ENCODE measurements at regions of chr18 and their contacts with region 1.

Region 1: GRCh38 chr18:11937874-11938478 is 29.9 kb upstream of the MPPE1 start:
- DNase-seq: peak; percentile 46 to 82 (median 76)
- ATAC-seq: peak; percentile 62
- H3K4me3 ChIP-seq: no peak overlapping the region
- H3K4me3 Mint-ChIP-seq: no peak overlapping the region
- H3K27ac ChIP-seq: no peak overlapping the region
- H3K27ac Mint-ChIP-seq: no peak overlapping the region
- H3K4me1 ChIP-seq: no peaks in the 10 kb centered on the region
- H3K4me1 Mint-ChIP-seq: no peaks in the 10 kb centered on the region
- H3K27me3 ChIP-seq: peaks cover 0 to 2% of the 10 kb centered on the region in 2 experiments
- H3K27me3 Mint-ChIP-seq: no peaks in the 10 kb centered on the region
- CTCF ChIP-seq: peak; percentile 85

Region 2: DNA sequence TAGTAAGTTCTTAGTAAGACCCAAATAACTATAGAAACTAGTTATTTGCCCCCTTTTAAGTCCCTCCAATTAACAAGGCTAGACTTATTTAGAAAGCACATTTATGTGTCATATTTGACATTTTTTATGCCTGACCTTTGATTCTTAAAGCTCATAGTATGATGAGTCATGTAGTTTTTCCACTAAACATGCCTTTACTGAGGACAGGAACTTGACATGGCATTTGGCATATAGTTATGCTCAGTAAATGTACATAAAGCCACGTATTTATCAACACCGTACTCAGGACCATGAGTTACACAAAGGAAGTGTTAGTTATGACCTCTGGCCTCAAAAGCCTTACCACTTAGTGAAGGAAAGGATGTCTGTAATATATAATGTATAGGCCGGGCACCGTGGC is 170.0 kb before region 1 on chr18:
- CTCF ChIA-PET with region 1: no interaction called
- POLR2A ChIA-PET with region 1: no interaction called
- intact Hi-C with region 1: no loop called
- DNase-seq: no peak
- ATAC-seq: no peak
- H3K4me3 ChIP-seq: no peak overlapping the region
- H3K4me3 Mint-ChIP-seq: no peak overlapping the region
- H3K27ac ChIP-seq: no peak overlapping the region
- H3K27ac Mint-ChIP-seq: no peak overlapping the region
- H3K4me1 ChIP-seq: no peaks in the 10 kb centered on the region
- H3K4me1 Mint-ChIP-seq: no peaks in the 10 kb centered on the region
- H3K27me3 ChIP-seq: peaks cover 0 to 3% of the 10 kb centered on the region in 2 experiments
- H3K27me3 Mint-ChIP-seq: peaks cover 7% of the 10 kb centered on the region
- CTCF ChIP-seq: no peak

Region 3: DNA sequence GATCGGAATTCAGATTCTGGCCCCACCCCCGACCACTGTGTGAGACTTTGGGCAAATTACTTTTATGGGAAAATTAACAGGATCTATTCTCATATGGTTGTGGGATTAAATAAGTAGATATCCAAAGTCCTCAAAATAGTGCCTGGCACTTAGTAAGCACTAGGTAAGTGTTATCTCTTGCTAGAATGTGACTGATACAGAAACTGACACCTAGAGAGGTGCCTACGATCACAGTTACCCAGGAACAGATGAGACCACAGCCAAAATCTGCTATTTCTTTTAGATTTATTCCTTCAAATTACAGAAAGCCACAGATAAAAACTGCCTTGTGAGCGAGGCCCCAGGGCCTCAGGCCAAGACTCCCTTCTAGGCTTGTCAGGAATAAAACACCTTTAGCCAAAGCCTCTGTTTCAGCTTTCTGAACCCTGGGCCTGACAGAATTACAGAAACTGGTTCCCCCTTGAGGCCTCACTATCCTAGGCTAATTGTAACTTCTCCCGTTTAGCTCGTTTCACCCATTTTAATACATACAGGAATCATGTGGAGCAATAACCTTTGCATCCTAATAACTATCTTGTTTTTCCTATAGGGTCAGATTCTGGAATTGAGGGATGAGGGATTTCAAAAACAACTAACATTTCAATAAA is 109.1 kb before region 1 on chr18:
- CTCF ChIA-PET with region 1: no interaction called
- POLR2A ChIA-PET with region 1: no interaction called
- intact Hi-C with region 1: no loop called
- DNase-seq: peak in 2 of 9 experiments; percentile 19 to 48
- ATAC-seq: no peak
- H3K4me3 ChIP-seq: no peak overlapping the region
- H3K4me3 Mint-ChIP-seq: no peak overlapping the region
- H3K27ac ChIP-seq: peak overlapping the region in 1 of 2 experiments; percentile 25
- H3K27ac Mint-ChIP-seq: no peak overlapping the region
- H3K4me1 ChIP-seq: no peaks in the 10 kb centered on the region
- H3K4me1 Mint-ChIP-seq: no peaks in the 10 kb centered on the region
- H3K27me3 ChIP-seq: no peaks in the 10 kb centered on the region
- H3K27me3 Mint-ChIP-seq: no peaks in the 10 kb centered on the region
- CTCF ChIP-seq: no peak

Region 4: DNA sequence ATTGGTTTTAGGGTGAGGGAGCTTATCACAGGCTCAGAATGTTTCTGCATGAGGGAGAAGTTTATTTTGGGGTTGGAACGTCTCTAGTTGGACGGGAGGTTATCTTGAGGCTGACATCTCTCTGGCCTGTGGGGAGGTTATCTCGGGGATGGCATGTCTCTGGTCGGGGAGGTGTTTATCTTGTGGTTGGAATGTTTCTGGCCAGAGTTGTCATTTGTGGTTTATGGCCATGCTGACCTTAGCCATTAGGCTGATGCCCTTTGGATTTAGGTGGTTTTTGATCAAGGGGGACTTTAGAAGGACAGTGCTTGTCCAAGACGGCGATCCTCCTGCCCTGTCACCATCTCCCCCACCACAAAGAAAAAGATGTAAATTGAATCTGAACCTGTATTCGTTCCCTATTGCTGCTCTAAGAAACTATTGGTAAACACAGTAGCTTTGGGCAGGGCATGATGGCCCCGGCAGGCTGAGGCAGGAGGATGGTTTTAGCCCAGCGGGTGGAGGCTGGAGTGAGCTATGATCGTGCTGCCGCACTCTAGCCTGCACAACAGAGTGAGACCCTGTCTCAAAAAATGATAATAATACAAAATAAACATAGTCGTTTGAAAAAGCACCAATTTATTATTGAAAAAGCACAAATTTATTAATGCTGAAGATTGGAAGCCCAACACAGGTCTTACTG is 12.0 kb before region 1 on chr18:
- CTCF ChIA-PET with region 1: interaction called, 41 read pairs
- POLR2A ChIA-PET with region 1: no interaction called
- intact Hi-C with region 1: no loop called
- DNase-seq: no peak
- ATAC-seq: no peak
- H3K4me3 ChIP-seq: no peak overlapping the region
- H3K4me3 Mint-ChIP-seq: no peak overlapping the region
- H3K27ac ChIP-seq: no peak overlapping the region
- H3K27ac Mint-ChIP-seq: no peak overlapping the region
- H3K4me1 ChIP-seq: no peaks in the 10 kb centered on the region
- H3K4me1 Mint-ChIP-seq: no peaks in the 10 kb centered on the region
- H3K27me3 ChIP-seq: no peaks in the 10 kb centered on the region
- H3K27me3 Mint-ChIP-seq: peaks cover 4% of the 10 kb centered on the region
- CTCF ChIP-seq: no peak

Region 5: GRCh38 chr18:11980555-11981382 is 42.8 kb after region 1 on chr18:
- CTCF ChIA-PET with region 1: interaction called, 17 read pairs
- POLR2A ChIA-PET with region 1: no interaction called
- intact Hi-C with region 1: no loop called
- DNase-seq: peak; percentile 88 to 97 (median 92)
- ATAC-seq: peak; percentile 90
- H3K4me3 ChIP-seq: peak overlapping the region; percentile 56 to 68
- H3K4me3 Mint-ChIP-seq: peak overlapping the region; percentile 85
- H3K27ac ChIP-seq: no peak overlapping the region
- H3K27ac Mint-ChIP-seq: peak overlapping the region; percentile 52
- H3K4me1 ChIP-seq: no peaks in the 10 kb centered on the region
- H3K4me1 Mint-ChIP-seq: peaks cover 11% of the 10 kb centered on the region
- H3K27me3 ChIP-seq: peaks cover 0 to 2% of the 10 kb centered on the region in 2 experiments
- H3K27me3 Mint-ChIP-seq: no peaks in the 10 kb centered on the region
- CTCF ChIP-seq: no peak

Region 6: GRCh38 chr18:12005538-12006487 is 67.8 kb after region 1 on chr18:
- CTCF ChIA-PET with region 1: interaction called, 448 read pairs
- POLR2A ChIA-PET with region 1: no interaction called
- intact Hi-C with region 1: no loop called
- DNase-seq: no peak
- ATAC-seq: no peak
- H3K4me3 ChIP-seq: no peak overlapping the region
- H3K4me3 Mint-ChIP-seq: no peak overlapping the region
- H3K27ac ChIP-seq: no peak overlapping the region
- H3K27ac Mint-ChIP-seq: no peak overlapping the region
- H3K4me1 ChIP-seq: no peaks in the 10 kb centered on the region
- H3K4me1 Mint-ChIP-seq: no peaks in the 10 kb centered on the region
- H3K27me3 ChIP-seq: no peaks in the 10 kb centered on the region
- H3K27me3 Mint-ChIP-seq: no peaks in the 10 kb centered on the region
- CTCF ChIP-seq: no peak

Region 7: DNA sequence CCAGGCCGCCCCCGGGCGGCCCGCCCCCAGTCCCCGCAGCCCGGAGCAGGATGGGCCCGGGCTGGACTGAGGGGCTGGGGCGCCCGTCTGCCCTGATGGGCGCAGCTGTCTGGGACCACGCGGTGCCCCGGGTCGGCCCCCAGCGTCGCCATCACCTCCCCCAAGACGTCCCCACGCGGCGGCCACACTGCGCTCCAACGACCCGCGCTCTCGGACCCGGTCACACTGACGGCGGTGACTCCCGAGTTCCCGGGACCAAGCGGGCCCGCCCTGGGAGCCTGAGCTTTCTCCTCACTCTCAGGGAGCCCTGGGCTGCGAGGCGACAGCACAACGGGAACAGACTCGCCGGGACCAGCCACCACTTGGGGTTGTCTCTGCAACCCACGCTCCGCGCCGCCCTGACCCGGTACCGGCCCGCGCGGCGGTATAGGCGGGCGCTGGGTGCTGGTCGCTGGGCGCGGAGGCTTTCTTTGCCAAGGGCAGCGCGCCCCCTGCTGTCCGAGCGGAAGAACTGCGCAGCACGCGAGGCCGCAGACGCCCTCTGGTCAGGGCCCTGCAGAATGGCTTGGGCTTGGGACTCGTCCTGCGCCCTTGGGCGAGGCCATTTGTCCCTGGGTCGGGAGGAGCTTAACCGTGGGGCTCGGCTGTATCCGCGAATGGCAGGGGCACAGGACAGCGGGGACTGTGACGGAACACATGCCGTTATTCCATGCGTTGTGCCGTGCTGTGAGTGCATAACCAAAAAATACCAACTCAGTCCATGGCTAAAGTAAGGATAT is 100.9 kb after region 1 on chr18:
- CTCF ChIA-PET with region 1: interaction called, 102 read pairs
- POLR2A ChIA-PET with region 1: interaction called, 3 read pairs
- intact Hi-C with region 1: loop called (anchors 1 kb)
- DNase-seq: peak; percentile 41 to 87 (median 72)
- ATAC-seq: peak; percentile 92
- H3K4me3 ChIP-seq: peak overlapping the region; percentile 48 to 50
- H3K4me3 Mint-ChIP-seq: peak overlapping the region; percentile 74
- H3K27ac ChIP-seq: no peak overlapping the region
- H3K27ac Mint-ChIP-seq: no peak overlapping the region
- H3K4me1 ChIP-seq: no peaks in the 10 kb centered on the region
- H3K4me1 Mint-ChIP-seq: peaks cover 4% of the 10 kb centered on the region
- H3K27me3 ChIP-seq: peaks cover 2 to 3% of the 10 kb centered on the region in 2 experiments
- H3K27me3 Mint-ChIP-seq: peaks cover 16% of the 10 kb centered on the region
- CTCF ChIP-seq: peak; percentile 97

Region 8: DNA sequence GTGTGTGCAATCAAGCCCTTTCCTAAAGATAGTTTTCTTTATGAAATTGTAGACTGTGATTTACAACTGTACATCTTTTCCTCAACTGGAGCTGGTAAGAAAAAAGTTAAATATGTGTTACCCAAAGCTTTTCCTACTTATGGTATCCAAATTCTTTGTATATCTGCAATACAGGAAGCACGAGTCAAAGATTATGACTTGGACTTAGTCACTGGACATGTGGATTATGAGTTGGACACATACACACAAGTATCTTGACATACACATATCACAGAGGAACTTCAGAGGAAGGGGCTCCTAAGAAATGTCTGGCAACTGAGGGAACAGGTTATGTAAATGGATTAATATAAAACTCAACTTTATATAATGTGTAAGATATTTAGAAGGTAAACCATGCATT is 505.0 kb after region 1 on chr18:
- CTCF ChIA-PET with region 1: no interaction called
- POLR2A ChIA-PET with region 1: no interaction called
- intact Hi-C with region 1: no loop called
- DNase-seq: no peak
- ATAC-seq: no peak
- H3K4me3 ChIP-seq: no peak overlapping the region
- H3K4me3 Mint-ChIP-seq: no peak overlapping the region
- H3K27ac ChIP-seq: no peak overlapping the region
- H3K27ac Mint-ChIP-seq: no peak overlapping the region
- H3K4me1 ChIP-seq: no peaks in the 10 kb centered on the region
- H3K4me1 Mint-ChIP-seq: no peaks in the 10 kb centered on the region
- H3K27me3 ChIP-seq: no peaks in the 10 kb centered on the region
- H3K27me3 Mint-ChIP-seq: no peaks in the 10 kb centered on the region
- CTCF ChIP-seq: no peak

Region 9: DNA sequence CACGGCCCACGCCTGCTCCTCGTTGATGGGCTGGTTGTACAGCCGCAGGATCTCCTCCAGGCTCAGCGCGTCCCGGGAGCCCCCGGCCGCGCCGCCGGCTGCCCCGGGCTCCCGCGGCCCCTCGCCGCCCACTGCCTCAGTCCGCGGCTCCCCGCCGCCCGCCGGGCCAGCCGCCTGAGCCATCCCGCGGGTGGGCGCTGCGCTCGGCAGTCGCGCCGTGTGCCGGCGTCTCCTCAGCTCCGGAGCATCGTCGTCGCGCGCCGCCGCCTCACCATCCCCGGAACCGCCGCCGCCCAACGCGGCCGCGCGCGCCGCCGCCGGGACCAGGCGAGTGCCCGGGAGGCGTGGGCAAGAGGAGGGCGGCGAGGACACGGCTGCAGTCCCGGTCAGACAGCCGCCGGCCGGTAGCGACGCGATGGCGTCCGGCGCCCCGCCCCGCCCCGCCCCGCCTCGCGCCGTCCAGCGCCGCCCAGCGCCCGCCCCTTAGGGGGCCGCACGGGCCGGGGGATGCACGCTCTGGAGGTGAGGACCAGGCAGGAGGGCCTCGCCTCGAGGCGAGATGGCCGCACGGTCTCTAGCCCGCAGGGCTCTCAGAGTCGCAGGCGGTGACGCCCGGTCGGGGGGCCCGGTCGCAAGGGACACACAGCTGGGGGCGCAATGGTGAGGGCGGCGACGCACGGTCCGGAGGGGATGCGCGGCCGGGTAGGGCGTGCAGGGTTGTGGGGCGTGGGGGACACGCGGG is 719.9 kb after region 1 on chr18 and contains the start of gene SPIRE1:
- CTCF ChIA-PET with region 1: no interaction called
- POLR2A ChIA-PET with region 1: no interaction called
- intact Hi-C with region 1: loop called in 1 of 2 experiments (anchors 10 kb)
- DNase-seq: peak in 8 of 9 experiments; percentile 12 to 69 (median 32)
- ATAC-seq: peak; percentile 54
- H3K4me3 ChIP-seq: peak within 1 kb of the TSS; percentile 43 to 45
- H3K4me3 Mint-ChIP-seq: peak within 1 kb of the TSS; percentile 88
- H3K27ac ChIP-seq: no peak within 1 kb of the TSS
- H3K27ac Mint-ChIP-seq: no peak within 1 kb of the TSS
- H3K4me1 ChIP-seq: peaks cover 9% of the 10 kb centered on the region
- H3K4me1 Mint-ChIP-seq: peaks cover 12% of the 10 kb centered on the region
- H3K27me3 ChIP-seq: no peaks in the 10 kb centered on the region
- H3K27me3 Mint-ChIP-seq: peaks cover 11% of the 10 kb centered on the region
- CTCF ChIP-seq: no peak
- total RNA-seq, gene SPIRE1: 0.57 to 0.69 TPM